ENCODE measurements at regions of chr6 and their contacts with region 1.

Region 1: GRCh38 chr6:26596579-26597388 is at the start of gene ABT1:
- DNase-seq: peak; percentile 92 to 99
- H3K4me3 ChIP-seq: peak within 1 kb of the TSS; percentile 72 to 91
- H3K27ac ChIP-seq: peak within 1 kb of the TSS; percentile 86 to 91
- H3K4me1 ChIP-seq: peaks cover 4 to 6% of the 10 kb centered on the region in 2 donors
- H3K27me3 ChIP-seq: peaks cover 18% of the 10 kb centered on the region
- CTCF ChIP-seq: no peak
- total RNA-seq, gene ABT1: 20.1 TPM

Region 2: GRCh38 chr6:26342106-26343004 is 254.4 kb before region 1 on chr6:
- intact Hi-C with region 1: loop called (anchors 1 kb)
- DNase-seq: no peak
- H3K4me3 ChIP-seq: peak overlapping the region in 1 of 2 donors; percentile 25
- H3K27ac ChIP-seq: no peak overlapping the region
- H3K4me1 ChIP-seq: peaks cover 0 to 3% of the 10 kb centered on the region in 2 donors
- H3K27me3 ChIP-seq: no peaks in the 10 kb centered on the region
- CTCF ChIP-seq: no peak

Region 3: GRCh38 chr6:26613689-26614683 is 17.2 kb after region 1 on chr6:
- intact Hi-C with region 1: no loop called
- DNase-seq: no peak
- H3K4me3 ChIP-seq: peak overlapping the region in 1 of 2 donors; percentile 52
- H3K27ac ChIP-seq: no peak overlapping the region
- H3K4me1 ChIP-seq: peaks cover 0 to 4% of the 10 kb centered on the region in 2 donors
- H3K27me3 ChIP-seq: peaks cover 8% of the 10 kb centered on the region
- CTCF ChIP-seq: no peak

Region 4: GRCh38 chr6:26659042-26659999 is 62.5 kb after region 1 on chr6 and contains the start of gene ZNF322:
- intact Hi-C with region 1: loop called (anchors 2 kb)
- DNase-seq: peak; percentile 75 to 97
- H3K4me3 ChIP-seq: peak within 1 kb of the TSS; percentile 67 to 86
- H3K27ac ChIP-seq: peak within 1 kb of the TSS; percentile 80 to 86
- H3K4me1 ChIP-seq: peaks cover 0 to 13% of the 10 kb centered on the region in 2 donors
- H3K27me3 ChIP-seq: no peaks in the 10 kb centered on the region
- CTCF ChIP-seq: no peak
- total RNA-seq, gene ZNF322: 12.3 TPM

Region 5: GRCh38 chr6:27472617-27473400 is 876.0 kb after region 1 on chr6 and contains the start of gene ZNF184:
- intact Hi-C with region 1: loop called (anchors 10 kb)
- DNase-seq: peak; percentile 75 to 97
- H3K4me3 ChIP-seq: peak within 1 kb of the TSS; percentile 65 to 89
- H3K27ac ChIP-seq: peak within 1 kb of the TSS; percentile 84 to 86
- H3K4me1 ChIP-seq: peaks cover 0 to 8% of the 10 kb centered on the region in 2 donors
- H3K27me3 ChIP-seq: no peaks in the 10 kb centered on the region
- CTCF ChIP-seq: peak in 2 of 3 experiments; percentile 7 to 12
- total RNA-seq, gene ZNF184: 2.1 TPM

Region 6: GRCh38 chr6:27753668-27754407 is 1157.1 kb after region 1 on chr6:
- intact Hi-C with region 1: loop called (anchors 10 kb)
- DNase-seq: peak in 1 of 2 donors; percentile 81
- H3K4me3 ChIP-seq: peak overlapping the region; percentile 32 to 93
- H3K27ac ChIP-seq: no peak overlapping the region
- H3K4me1 ChIP-seq: peaks cover 0 to 3% of the 10 kb centered on the region in 2 donors
- H3K27me3 ChIP-seq: peaks cover 5% of the 10 kb centered on the region
- CTCF ChIP-seq: no peak